Naive thymus-derived CD4-positive, alpha-beta T cell (primary cell): ENCODE measurements at regions of chr20 and their contacts with region 1.

Region 1: DNA sequence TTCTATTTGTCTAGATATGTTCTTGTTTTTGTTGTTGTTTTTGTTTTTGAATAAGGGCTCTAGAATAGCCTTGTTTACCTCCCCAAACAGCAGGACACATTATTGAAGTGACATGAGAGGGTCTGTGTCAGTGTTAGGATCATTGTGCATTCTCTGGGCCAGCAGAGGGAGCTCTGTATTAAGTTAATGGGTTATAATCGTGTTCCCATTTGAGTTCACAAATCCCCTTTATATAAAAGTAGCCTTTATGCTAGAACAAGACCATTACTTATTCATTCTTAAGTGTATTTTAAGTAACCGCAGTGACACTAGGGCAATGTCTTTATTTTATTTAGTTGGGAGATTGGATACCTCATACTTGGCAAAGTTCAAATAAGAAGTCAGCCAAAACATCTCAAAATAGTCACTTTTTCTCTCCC is 44.8 kb downstream of the STK4 start:
- DNase-seq: peak in 7 of 9 donors; percentile 24 to 47 (median 36)
- ATAC-seq: peak; percentile 86
- H3K4me3 ChIP-seq: no peak overlapping the region
- H3K4me3 Mint-ChIP-seq: peak overlapping the region in 3 of 10 donors; percentile 11 to 48 (median 42)
- H3K27ac ChIP-seq: peak overlapping the region; percentile 32
- H3K27ac Mint-ChIP-seq: peak overlapping the region in 7 of 9 donors; percentile 1 to 79 (median 30)
- H3K4me1 ChIP-seq: peaks cover under 1 to 43% of the 10 kb centered on the region in 2 donors
- H3K4me1 Mint-ChIP-seq: peaks cover 31 to 81% (median 70%) of the 10 kb centered on the region in 7 donors
- H3K27me3 ChIP-seq: no peaks in the 10 kb centered on the region
- H3K27me3 Mint-ChIP-seq: no peaks in the 10 kb centered on the region

Region 2: DNA sequence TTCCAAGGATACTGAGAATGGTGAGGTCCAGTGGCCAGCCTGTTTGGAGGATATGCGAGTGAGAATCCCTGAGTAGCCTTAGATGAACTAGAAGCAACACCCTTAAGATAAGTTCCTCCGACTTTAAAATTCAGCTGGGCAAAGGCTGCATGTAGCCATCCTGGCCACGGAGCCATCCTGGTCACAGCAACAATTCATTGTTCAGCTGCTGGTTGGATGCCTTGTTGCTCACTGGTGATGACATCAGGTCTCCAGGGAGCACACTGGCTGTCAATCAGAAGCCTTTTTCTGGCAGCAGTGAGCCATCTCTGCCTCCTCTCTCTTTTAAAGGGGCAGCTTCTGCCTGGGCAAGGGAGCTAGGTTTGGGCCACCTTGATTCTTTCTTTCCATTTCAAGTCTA is 178.4 kb before region 1 on chr20:
- CTCF ChIA-PET with region 1: no interaction called
- POLR2A ChIA-PET with region 1: no interaction called
- intact Hi-C with region 1: no loop called
- DNase-seq: no peak
- ATAC-seq: no peak
- H3K4me3 ChIP-seq: no peak overlapping the region
- H3K4me3 Mint-ChIP-seq: no peak overlapping the region
- H3K27ac ChIP-seq: no peak overlapping the region
- H3K27ac Mint-ChIP-seq: no peak overlapping the region
- H3K4me1 ChIP-seq: no peaks in the 10 kb centered on the region
- H3K4me1 Mint-ChIP-seq: no peaks in the 10 kb centered on the region
- H3K27me3 ChIP-seq: no peaks in the 10 kb centered on the region
- H3K27me3 Mint-ChIP-seq: peaks cover 23 to 45% (median 25%) of the 10 kb centered on the region in 5 donors

Region 3: GRCh38 chr20:44909872-44910689 is 101.0 kb before region 1 on chr20 and contains the start of gene PABPC1L:
- CTCF ChIA-PET with region 1: no interaction called
- POLR2A ChIA-PET with region 1: no interaction called
- intact Hi-C with region 1: loop called in 1 of 2 experiments (anchors 5 kb)
- DNase-seq: peak; percentile 58 to 86 (median 71)
- ATAC-seq: peak; percentile 97
- H3K4me3 ChIP-seq: peak within 1 kb of the TSS; percentile 69
- H3K4me3 Mint-ChIP-seq: peak within 1 kb of the TSS; percentile 75 to 89 (median 85)
- H3K27ac ChIP-seq: peak within 1 kb of the TSS; percentile 53
- H3K27ac Mint-ChIP-seq: peak within 1 kb of the TSS; percentile 46 to 83 (median 78)
- H3K4me1 ChIP-seq: peaks cover 6 to 17% of the 10 kb centered on the region in 2 donors
- H3K4me1 Mint-ChIP-seq: peaks cover 12 to 47% (median 38%) of the 10 kb centered on the region in 7 donors
- H3K27me3 ChIP-seq: no peaks in the 10 kb centered on the region
- H3K27me3 Mint-ChIP-seq: no peaks in the 10 kb centered on the region
- total RNA-seq, gene PABPC1L: 34.0 to 71.7 (median 59.0) TPM

Region 4: DNA sequence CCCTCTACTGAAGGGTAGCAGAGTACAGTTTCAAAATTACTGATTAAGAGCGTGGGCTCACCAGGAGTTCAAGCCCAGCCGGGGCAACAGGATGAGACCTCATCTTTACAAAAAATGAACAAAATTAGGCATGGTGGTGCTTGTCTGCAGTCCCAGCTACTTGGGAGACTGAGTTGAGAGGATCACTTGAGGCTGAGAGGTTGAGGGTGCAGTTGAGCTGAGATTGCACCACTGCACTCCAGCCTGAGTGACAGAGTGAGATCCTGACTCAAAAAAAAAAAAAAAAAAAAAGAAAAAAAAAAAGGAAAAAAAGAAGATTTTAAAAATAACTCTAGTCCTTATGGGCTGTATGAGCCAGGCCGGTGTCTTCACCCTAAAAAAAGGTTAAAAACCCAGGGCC is 82.5 kb before region 1 on chr20:
- CTCF ChIA-PET with region 1: no interaction called
- POLR2A ChIA-PET with region 1: no interaction called
- intact Hi-C with region 1: no loop called
- DNase-seq: no peak
- ATAC-seq: no peak
- H3K4me3 ChIP-seq: no peak overlapping the region
- H3K4me3 Mint-ChIP-seq: no peak overlapping the region
- H3K27ac ChIP-seq: no peak overlapping the region
- H3K27ac Mint-ChIP-seq: peak overlapping the region in 2 of 9 donors; percentile 16 to 66
- H3K4me1 ChIP-seq: no peaks in the 10 kb centered on the region
- H3K4me1 Mint-ChIP-seq: no peaks in the 10 kb centered on the region
- H3K27me3 ChIP-seq: no peaks in the 10 kb centered on the region
- H3K27me3 Mint-ChIP-seq: no peaks in the 10 kb centered on the region

Region 5: DNA sequence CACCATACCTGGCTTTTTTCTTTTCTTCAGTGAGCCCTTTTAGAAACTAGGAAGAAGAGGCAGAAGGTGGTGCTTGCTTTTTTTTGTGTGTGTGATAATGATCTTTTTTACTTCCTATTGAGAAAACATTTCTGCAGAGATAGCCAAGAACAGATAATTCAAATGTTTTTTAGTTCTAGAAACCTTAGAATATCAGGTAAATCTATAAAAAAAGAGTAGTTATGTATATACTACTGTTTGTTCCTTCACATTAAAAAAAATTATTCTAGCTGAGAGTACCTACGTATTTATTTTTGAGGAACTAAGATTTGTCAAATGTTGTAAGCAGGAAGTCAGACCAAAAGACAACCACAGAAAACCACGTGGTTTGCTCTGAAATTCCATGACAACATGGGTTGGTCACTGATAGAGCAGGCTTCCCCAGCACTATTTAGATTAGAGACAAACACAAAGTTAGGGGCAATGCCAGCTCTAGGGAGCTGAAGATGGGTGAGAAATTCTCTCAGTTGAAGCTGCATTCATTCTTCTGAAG is 32.0 kb before region 1 on chr20:
- CTCF ChIA-PET with region 1: interaction called, 4 read pairs
- POLR2A ChIA-PET with region 1: interaction called, 14 read pairs
- intact Hi-C with region 1: no loop called
- DNase-seq: peak in 8 of 9 donors; percentile 60 to 93 (median 86)
- ATAC-seq: peak; percentile 93
- H3K4me3 ChIP-seq: peak overlapping the region; percentile 40
- H3K4me3 Mint-ChIP-seq: peak overlapping the region; percentile 74 to 90 (median 79)
- H3K27ac ChIP-seq: peak overlapping the region; percentile 98
- H3K27ac Mint-ChIP-seq: peak overlapping the region; percentile 86 to 98 (median 97)
- H3K4me1 ChIP-seq: peaks cover 64 to 70% of the 10 kb centered on the region in 2 donors
- H3K4me1 Mint-ChIP-seq: peaks cover 71 to 96% (median 90%) of the 10 kb centered on the region in 7 donors
- H3K27me3 ChIP-seq: no peaks in the 10 kb centered on the region
- H3K27me3 Mint-ChIP-seq: no peaks in the 10 kb centered on the region

Region 6: DNA sequence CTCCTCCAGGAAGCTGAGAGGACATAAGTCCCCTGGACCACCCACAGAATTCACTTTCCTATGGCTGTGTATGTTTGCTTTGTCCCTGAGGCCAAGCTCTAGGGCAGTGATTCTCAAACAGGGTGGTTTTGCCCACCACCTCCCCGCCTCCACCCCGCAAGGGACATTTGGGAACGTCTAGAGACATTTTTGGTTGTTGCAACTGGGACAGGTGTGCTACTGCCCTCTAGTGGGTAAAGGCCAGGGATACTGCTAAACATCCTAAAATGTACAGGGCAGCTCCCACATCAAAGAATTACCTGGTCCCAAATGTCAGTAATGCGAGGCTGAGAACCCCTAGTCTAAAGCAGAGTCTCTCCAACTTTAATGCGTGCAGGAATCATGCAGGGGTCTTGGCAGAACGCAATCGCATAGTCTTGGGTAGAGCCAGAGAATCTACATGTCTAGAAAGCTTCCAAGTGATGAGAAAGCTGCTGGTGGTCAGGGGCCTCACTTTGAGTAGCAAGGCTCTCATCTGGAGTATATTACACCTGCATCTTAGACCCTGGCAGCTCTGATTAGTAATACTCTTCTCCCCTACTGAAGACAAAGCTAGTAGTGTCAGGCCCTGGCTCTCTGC is 84.7 kb after region 1 on chr20:
- CTCF ChIA-PET with region 1: interaction called, 11 read pairs
- POLR2A ChIA-PET with region 1: no interaction called
- intact Hi-C with region 1: loop called (anchors 1 kb)
- DNase-seq: peak in 8 of 9 donors; percentile 28 to 68 (median 58)
- ATAC-seq: peak; percentile 76
- H3K4me3 ChIP-seq: no peak overlapping the region
- H3K4me3 Mint-ChIP-seq: peak overlapping the region in 1 of 10 donors; percentile 29
- H3K27ac ChIP-seq: no peak overlapping the region
- H3K27ac Mint-ChIP-seq: peak overlapping the region in 2 of 9 donors; percentile 30 to 41
- H3K4me1 ChIP-seq: peaks cover 0 to 8% of the 10 kb centered on the region in 2 donors
- H3K4me1 Mint-ChIP-seq: peaks cover 5 to 24% (median 15%) of the 10 kb centered on the region in 7 donors
- H3K27me3 ChIP-seq: peaks cover 7 to 21% of the 10 kb centered on the region in 2 donors
- H3K27me3 Mint-ChIP-seq: peaks cover 32 to 38% (median 33%) of the 10 kb centered on the region in 5 donors

Region 7: DNA sequence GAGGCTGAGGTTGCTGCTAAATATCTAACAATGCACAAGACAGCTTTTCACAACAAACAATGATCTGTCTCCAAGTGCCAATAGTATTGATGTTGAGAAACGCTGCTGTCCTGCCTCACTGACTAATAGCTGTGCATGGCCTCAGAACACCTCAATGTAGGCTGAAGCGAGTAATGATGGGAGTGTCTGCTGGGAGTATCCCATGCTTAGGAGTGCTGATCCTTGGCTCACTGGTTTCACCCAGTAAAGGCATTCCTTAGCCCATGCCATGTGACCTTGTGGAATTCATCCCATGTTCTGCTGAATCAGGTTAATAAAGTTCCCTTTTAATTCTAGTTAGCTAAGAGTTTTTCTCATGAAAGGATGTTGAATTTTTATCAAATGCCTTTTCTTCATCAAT is 117.0 kb after region 1 on chr20:
- CTCF ChIA-PET with region 1: no interaction called
- POLR2A ChIA-PET with region 1: no interaction called
- intact Hi-C with region 1: no loop called
- DNase-seq: no peak
- ATAC-seq: no peak
- H3K4me3 ChIP-seq: no peak overlapping the region
- H3K4me3 Mint-ChIP-seq: no peak overlapping the region
- H3K27ac ChIP-seq: no peak overlapping the region
- H3K27ac Mint-ChIP-seq: no peak overlapping the region
- H3K4me1 ChIP-seq: no peaks in the 10 kb centered on the region
- H3K4me1 Mint-ChIP-seq: no peaks in the 10 kb centered on the region
- H3K27me3 ChIP-seq: peaks cover 0 to 4% of the 10 kb centered on the region in 2 donors
- H3K27me3 Mint-ChIP-seq: peaks cover 24 to 57% (median 44%) of the 10 kb centered on the region in 5 donors

Region 8: DNA sequence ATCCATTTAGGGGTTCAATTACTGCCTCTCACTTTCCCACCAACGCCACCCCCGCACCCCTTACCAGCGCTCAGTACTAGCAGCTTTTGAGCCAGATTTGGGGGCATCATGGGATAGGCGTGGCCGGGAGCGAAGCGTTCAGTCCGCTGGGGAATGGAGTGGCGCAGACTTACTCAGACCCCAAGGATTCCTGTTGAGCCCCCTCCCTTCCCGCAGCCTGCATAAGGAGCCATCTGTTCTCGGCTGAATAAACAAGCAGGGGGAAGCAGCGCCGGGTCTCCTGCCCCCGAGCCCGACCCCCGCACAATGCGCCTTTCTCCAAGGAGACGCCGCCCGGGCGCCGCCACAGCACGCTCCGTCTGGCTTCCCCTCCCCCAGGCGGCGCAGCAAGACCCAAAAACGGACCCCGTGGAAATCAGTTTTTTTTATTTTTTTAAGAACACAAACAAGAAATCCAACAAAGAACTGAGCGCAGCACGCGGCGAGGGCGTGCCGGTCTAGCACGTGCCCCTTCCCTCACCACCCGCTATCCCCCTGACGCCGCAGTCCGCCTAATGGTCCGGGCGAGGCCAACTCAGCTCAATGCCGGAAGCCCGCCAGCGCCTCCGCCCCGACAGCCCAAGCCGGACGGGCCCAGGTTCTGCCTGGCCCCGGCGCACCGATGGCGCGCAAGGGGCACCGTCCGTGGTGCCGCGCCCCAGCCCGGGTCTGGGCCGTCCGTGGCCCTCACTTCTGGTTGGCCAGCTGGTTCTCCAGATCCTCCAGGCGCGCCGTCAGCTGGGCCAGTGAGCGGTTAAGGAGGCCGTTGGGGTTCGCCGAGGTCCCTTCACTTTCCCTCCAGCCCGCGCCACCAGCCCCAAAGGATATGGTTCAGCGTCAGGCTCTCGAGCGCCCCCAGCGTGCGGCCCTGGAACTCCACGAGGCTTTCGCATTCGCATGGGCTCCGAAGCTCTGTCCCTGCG is 282.2 kb after region 1 on chr20:
- CTCF ChIA-PET with region 1: interaction called, 5 read pairs
- POLR2A ChIA-PET with region 1: no interaction called
- intact Hi-C with region 1: loop called in 1 of 2 experiments (anchors 1 kb)
- DNase-seq: peak; percentile 33 to 89 (median 68)
- ATAC-seq: peak; percentile 93
- H3K4me3 ChIP-seq: peak overlapping the region; percentile 54
- H3K4me3 Mint-ChIP-seq: peak overlapping the region; percentile 57 to 83 (median 78)
- H3K27ac ChIP-seq: no peak overlapping the region
- H3K27ac Mint-ChIP-seq: no peak overlapping the region
- H3K4me1 ChIP-seq: peaks cover 4 to 14% of the 10 kb centered on the region in 2 donors
- H3K4me1 Mint-ChIP-seq: peaks cover 4 to 21% (median 11%) of the 10 kb centered on the region in 7 donors
- H3K27me3 ChIP-seq: peaks cover 0 to 10% of the 10 kb centered on the region in 2 donors
- H3K27me3 Mint-ChIP-seq: peaks cover 31 to 48% (median 38%) of the 10 kb centered on the region in 5 donors